Activated CD8-positive, alpha-beta T cell treated with anti-CD3 and anti-CD28 coated beads for 36 hours (primary cell): ENCODE measurements at regions of chr20 and their contacts with region 1.

Region 1: DNA sequence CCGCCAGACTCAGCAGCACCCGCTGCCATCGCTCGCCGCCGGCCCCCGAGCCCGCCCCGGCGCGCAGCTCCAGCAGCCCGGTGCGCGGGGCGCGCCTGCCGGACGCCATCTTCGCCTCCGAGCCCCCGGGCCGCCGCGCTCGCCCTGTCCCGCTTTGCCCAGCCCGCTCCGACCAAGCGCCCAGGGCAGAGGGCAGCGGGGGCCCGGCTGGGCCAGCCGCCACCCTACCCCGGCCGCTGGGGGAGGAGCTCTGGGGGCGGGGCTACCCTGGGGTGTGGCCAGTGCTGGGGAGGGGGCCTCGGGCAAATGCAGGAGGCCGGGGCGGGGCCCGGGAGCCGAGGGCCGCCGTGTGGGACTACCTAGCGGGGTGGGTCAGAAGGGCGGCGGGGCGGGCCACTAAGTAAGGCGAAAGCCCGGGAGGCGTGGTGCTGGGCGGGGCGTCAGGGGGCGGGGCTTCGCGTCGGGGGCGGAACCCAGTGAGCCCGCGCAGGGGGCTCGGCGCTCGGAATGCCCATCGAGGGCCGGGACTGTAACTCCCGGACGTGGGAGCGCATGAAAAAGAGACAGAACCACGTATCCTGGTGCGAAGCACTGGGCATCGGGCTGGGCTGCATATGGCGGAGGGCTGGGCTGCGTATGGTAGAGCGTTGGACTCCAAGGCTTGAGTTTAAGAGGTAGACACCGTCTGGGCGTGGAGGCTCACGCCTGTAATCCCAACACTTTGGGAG is at the start of gene SNTA1:
- DNase-seq: peak; percentile 94
- ATAC-seq: peak; percentile 89
- H3K4me3 Mint-ChIP-seq: peak within 1 kb of the TSS; percentile 83
- H3K27ac Mint-ChIP-seq: peak within 1 kb of the TSS; percentile 76
- H3K4me1 Mint-ChIP-seq: peaks cover 12% of the 10 kb centered on the region
- H3K27me3 Mint-ChIP-seq: no peaks in the 10 kb centered on the region
- CTCF ChIP-seq: no peak
- total RNA-seq, gene SNTA1: 5.6 to 5.8 TPM

Region 2: DNA sequence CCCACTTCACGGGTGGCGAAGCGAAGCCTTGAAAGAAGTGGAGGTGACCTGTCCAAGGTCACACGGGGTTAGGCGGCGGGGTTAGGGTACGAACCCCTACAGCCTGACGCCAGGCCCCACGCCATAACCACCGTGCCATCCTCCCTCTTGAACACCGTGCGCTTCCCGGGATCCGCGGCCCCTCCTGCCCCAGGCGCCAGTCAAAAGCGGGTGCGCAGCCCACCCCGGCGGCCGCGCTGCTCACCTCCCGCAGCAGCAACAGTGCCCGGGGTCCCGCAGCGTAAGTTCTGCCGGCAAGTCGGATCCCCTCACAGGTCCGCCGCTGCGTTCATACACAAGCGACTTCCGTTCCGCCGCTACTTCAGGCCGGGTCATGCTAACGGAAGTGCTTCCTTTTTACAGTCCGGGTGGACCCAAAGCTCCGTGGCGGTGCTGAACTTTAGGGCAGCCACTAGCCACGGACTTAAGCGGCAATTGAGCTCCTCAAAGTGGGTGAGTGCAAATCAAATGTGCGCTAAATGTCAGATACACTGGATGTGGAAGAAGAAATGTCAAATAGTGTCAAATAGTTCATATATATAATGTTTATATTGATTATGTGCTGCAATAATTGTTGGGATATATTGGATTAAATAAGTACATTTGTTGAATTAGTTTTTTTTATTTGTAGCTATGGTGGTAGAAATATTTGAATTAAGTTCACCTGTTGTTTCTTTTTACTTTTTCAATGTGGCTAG is 42.3 kb before region 1 on chr20 and contains the start of gene CDK5RAP1:
- CTCF ChIA-PET with region 1: interaction called, 11 read pairs
- POLR2A ChIA-PET with region 1: interaction called, 5 read pairs
- intact Hi-C with region 1: no loop called
- DNase-seq: peak; percentile 93
- ATAC-seq: peak; percentile 97
- H3K4me3 Mint-ChIP-seq: peak within 1 kb of the TSS; percentile 84
- H3K27ac Mint-ChIP-seq: peak within 1 kb of the TSS; percentile 95
- H3K4me1 Mint-ChIP-seq: peaks cover 44% of the 10 kb centered on the region
- H3K27me3 Mint-ChIP-seq: no peaks in the 10 kb centered on the region
- CTCF ChIP-seq: no peak
- total RNA-seq, gene CDK5RAP1: 35.4 to 38.2 TPM

Region 3: DNA sequence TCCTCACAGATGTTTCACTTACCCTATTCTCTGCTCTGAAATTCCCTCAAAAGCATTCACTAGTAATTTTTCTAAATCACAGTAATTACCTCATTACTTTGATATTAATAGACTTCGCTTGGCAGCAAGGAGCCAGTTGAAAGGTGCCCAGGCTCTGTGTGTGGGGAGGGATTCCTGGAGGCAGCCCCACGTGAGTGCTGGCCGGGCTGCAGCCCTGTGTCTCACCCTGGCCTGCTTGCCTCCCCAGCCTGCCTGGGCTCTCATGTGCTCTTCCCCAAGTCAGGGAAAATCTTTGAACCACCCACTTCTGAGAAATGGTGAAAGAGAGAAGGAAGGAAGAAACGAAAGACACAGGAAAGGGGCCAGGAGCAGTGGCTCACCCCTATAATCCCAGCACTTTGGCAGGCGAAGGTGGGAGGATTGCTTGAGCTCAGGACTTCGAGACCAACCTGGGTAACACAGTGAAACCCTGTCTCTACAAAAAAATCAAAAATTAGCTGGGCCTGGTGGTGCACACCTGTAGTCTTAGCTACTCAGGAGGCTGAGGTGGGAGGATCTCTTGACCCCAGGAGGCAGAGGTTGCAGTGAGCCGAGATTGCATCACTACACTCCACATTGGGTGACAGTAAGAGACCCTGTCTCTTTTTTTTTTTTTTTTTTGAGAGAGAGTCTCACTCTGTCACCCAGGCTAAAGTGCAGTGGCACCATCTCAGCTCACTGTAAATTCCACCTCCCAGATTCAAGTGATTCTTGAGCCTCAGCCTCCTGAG is 19.8 kb after region 1 on chr20:
- CTCF ChIA-PET with region 1: no interaction called
- POLR2A ChIA-PET with region 1: no interaction called
- intact Hi-C with region 1: no loop called
- DNase-seq: no peak
- ATAC-seq: no peak
- H3K4me3 Mint-ChIP-seq: no peak overlapping the region
- H3K27ac Mint-ChIP-seq: no peak overlapping the region
- H3K4me1 Mint-ChIP-seq: no peaks in the 10 kb centered on the region
- H3K27me3 Mint-ChIP-seq: no peaks in the 10 kb centered on the region
- CTCF ChIP-seq: no peak